Activated B cell treated with CpG ODN at 0.5 μM for 24 hours (primary cell): ENCODE measurements at regions of chr2 and their contacts with region 1.

Region 1: GRCh38 chr2:33599175-33599942 is at the start of gene FAM98A:
- DNase-seq: peak; percentile 97
- ATAC-seq: peak; percentile 94
- H3K4me3 Mint-ChIP-seq: peak within 1 kb of the TSS; percentile 99
- H3K27ac Mint-ChIP-seq: peak within 1 kb of the TSS; percentile 96
- H3K4me1 Mint-ChIP-seq: peaks cover 34% of the 10 kb centered on the region
- H3K27me3 Mint-ChIP-seq: no peaks in the 10 kb centered on the region
- CTCF ChIP-seq: no peak
- total RNA-seq, gene FAM98A: 30.2 and 40.5 TPM in 2 replicates

Region 2: GRCh38 chr2:32277674-32278482 is 1321.5 kb before region 1 on chr2 and contains the start of gene YIPF4:
- CTCF ChIA-PET with region 1: no interaction called
- POLR2A ChIA-PET with region 1: no interaction called
- intact Hi-C with region 1: loop called (anchors 5 kb)
- DNase-seq: peak; percentile 92
- ATAC-seq: peak; percentile 98
- H3K4me3 Mint-ChIP-seq: peak within 1 kb of the TSS; percentile 90
- H3K27ac Mint-ChIP-seq: peak within 1 kb of the TSS; percentile 94
- H3K4me1 Mint-ChIP-seq: peaks cover 23% of the 10 kb centered on the region
- H3K27me3 Mint-ChIP-seq: peaks cover 9% of the 10 kb centered on the region
- CTCF ChIP-seq: no peak
- total RNA-seq, gene YIPF4: 25.6 and 27.2 TPM in 2 replicates

Region 3: DNA sequence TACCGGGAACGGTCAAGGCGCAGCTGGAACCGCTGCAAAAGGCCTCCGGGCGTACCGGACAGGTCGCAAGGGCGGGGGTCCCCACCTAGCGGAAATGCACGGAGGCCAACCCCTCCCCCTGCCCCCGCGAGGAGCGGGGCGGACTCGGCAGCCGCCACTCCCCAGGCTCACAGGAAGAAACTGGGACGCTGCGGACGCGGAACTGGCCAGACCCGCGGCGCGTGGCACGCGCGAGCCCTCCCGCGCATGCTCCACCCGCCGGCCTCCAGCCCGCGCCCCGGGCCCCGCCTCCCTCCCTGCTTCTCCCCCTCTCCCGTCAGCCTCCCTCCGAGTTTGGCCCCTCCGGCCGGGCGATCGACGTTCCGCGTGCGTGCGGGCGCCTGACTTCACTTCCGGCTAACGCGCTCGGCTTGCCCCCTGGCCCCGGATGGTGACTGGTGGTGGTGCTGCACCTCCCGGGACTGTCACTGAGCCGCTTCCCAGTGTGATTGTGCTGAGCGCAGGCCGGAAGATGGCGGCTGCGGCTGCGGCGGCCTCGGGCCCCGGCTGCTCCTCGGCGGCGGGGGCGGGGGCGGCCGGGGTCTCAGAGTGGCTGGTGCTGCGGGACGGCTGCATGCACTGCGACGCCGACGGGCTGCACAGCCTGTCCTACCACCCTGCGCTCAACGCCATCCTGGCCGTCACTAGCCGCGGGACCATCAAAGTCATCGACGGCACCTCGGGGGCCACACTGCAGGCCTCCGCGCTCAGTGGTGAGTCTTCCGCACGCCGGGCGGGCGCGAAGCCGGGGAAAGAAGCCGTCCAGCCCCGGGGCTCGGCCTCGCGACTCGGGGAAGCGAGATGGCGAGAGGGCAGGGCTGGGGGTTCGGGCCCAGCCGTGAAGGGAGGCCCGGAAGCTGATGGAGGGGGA is 1242.4 kb before region 1 on chr2 and contains the start of gene BIRC6:
- CTCF ChIA-PET with region 1: no interaction called
- POLR2A ChIA-PET with region 1: no interaction called
- intact Hi-C with region 1: loop called (anchors 5 kb)
- DNase-seq: peak; percentile 96
- ATAC-seq: peak; percentile 87
- H3K4me3 Mint-ChIP-seq: peak within 1 kb of the TSS; percentile 93
- H3K27ac Mint-ChIP-seq: peak within 1 kb of the TSS; percentile 90
- H3K4me1 Mint-ChIP-seq: peaks cover 41% of the 10 kb centered on the region
- H3K27me3 Mint-ChIP-seq: no peaks in the 10 kb centered on the region
- CTCF ChIP-seq: no peak
- total RNA-seq, gene BIRC6: 155 and 180 TPM in 2 replicates

Region 4: DNA sequence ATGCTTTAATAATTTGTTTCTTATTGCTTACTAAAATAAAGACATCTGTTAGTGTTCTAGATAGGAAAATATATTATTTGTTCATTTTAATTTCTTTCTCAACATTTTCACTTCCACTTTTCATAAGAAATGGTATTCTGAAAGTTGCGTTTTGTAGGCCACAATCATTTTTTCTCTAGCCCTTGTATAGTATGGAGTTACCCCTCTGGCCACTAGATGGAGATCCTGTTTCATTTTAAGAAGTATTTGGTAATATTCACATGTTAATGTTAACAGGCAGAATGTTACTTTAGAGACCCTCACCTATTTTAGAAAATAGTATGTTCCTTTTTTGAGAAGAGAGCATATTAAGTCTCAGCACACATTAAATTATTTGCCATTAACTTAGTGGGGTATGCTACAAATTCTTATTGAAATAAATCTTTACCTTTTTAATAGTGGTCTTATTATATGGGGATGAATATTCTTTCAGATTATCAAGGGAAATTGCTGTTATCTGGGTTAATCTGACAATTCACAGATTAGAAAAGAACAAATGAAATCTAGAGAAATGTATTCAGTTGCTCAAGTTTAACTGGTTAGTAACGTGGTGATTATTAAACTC is 1045.4 kb before region 1 on chr2:
- CTCF ChIA-PET with region 1: no interaction called
- POLR2A ChIA-PET with region 1: no interaction called
- intact Hi-C with region 1: loop called (anchors 5 kb)
- DNase-seq: no peak
- ATAC-seq: peak; percentile 85
- H3K4me3 Mint-ChIP-seq: no peak overlapping the region
- H3K27ac Mint-ChIP-seq: peak overlapping the region; percentile 30
- H3K4me1 Mint-ChIP-seq: peaks cover 6% of the 10 kb centered on the region
- H3K27me3 Mint-ChIP-seq: no peaks in the 10 kb centered on the region
- CTCF ChIP-seq: no peak

Region 5: GRCh38 chr2:32627814-32628579 is 971.4 kb before region 1 on chr2 and contains the start of gene TTC27:
- CTCF ChIA-PET with region 1: no interaction called
- POLR2A ChIA-PET with region 1: interaction called, 10 read pairs
- intact Hi-C with region 1: loop called (anchors 1 kb)
- DNase-seq: peak; percentile 93
- ATAC-seq: peak; percentile 100
- H3K4me3 Mint-ChIP-seq: peak within 1 kb of the TSS; percentile 97
- H3K27ac Mint-ChIP-seq: peak within 1 kb of the TSS; percentile 93
- H3K4me1 Mint-ChIP-seq: peaks cover 27% of the 10 kb centered on the region
- H3K27me3 Mint-ChIP-seq: no peaks in the 10 kb centered on the region
- CTCF ChIP-seq: no peak
- total RNA-seq, gene TTC27: 34.8 and 36.3 TPM in 2 replicates

Region 6: DNA sequence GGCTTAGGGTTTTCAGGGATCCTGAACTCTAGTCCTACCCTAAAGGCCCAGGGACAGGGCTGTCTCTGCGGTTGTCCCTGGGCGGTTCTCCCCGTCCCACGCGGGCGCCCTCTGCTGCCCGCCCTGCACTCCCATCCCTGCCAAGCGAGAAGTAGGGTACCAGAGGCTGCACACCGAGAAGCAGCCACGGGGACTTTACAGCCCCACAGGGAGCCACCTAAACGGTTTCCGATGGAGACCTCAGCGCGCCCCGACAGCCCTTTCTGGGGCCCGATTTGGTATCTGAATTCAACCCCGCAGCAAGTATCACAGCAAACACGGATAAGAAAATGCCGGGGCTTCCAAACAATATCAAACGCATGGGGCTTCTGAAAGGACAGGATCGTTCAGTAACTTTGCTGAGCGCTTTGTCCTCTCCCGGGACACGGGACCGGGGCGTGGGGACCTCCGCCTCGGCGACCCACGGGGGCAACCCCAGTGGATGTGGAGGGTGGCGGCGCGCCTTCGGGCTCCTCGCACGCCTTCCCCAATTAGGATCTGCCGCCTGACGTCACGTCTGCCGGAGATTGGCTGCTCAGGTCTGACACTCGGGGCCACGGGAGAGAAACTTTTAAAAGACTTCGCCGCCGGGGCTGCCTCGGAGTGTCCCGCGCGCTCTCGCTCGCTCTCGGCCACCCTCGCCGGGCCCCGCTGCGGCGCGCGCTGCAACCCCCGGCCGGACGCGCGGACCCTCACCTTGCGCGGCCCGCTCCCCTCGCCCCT is 652.9 kb before region 1 on chr2 and contains the start of gene LTBP1:
- CTCF ChIA-PET with region 1: no interaction called
- POLR2A ChIA-PET with region 1: no interaction called
- intact Hi-C with region 1: loop called (anchors 5 kb)
- DNase-seq: peak; percentile 41
- ATAC-seq: peak; percentile 78
- H3K4me3 Mint-ChIP-seq: peak within 1 kb of the TSS; percentile 83
- H3K27ac Mint-ChIP-seq: no peak within 1 kb of the TSS
- H3K4me1 Mint-ChIP-seq: peaks cover 15% of the 10 kb centered on the region
- H3K27me3 Mint-ChIP-seq: peaks cover 29% of the 10 kb centered on the region
- CTCF ChIP-seq: no peak
- total RNA-seq, gene LTBP1: 0.07 TPM in 1 of 2 replicates, not detected in the other

Region 7: DNA sequence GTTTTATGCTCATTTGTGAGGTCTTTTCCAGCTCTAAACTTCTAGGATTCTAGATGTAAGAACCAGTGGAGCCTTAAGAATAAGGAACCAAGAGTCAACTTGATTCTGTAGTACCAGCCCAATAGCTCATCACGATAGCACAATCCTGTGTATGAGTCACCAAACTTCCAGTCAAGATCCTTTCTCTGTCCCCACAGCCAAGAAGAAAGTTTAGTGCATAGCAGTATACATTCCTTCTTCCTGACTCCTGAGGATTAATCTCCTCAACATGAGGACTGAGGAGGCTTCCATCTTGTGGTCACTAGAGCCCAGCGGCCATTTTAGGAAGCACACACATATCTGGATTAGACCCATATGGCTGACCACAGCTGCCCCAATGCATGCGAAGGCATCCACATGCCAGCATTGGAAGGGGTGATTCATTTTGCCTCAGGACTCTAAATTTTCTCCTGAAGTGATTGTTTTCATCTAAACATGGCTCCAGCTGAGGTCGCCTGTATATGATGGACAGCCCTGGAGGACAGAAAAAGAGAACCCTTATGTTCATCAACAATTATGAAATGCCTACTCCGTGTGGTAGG is 69.5 kb before region 1 on chr2:
- CTCF ChIA-PET with region 1: no interaction called
- POLR2A ChIA-PET with region 1: interaction called, 7 read pairs
- intact Hi-C with region 1: loop called (anchors 2 kb)
- DNase-seq: no peak
- ATAC-seq: peak; percentile 33
- H3K4me3 Mint-ChIP-seq: peak overlapping the region; percentile 57
- H3K27ac Mint-ChIP-seq: peak overlapping the region; percentile 98
- H3K4me1 Mint-ChIP-seq: peaks cover 89% of the 10 kb centered on the region
- H3K27me3 Mint-ChIP-seq: no peaks in the 10 kb centered on the region
- CTCF ChIP-seq: no peak

Region 8: GRCh38 chr2:33723329-33723728 is 124.0 kb after region 1 on chr2:
- CTCF ChIA-PET with region 1: no interaction called
- POLR2A ChIA-PET with region 1: no interaction called
- intact Hi-C with region 1: no loop called
- DNase-seq: no peak
- ATAC-seq: no peak
- H3K4me3 Mint-ChIP-seq: no peak overlapping the region
- H3K27ac Mint-ChIP-seq: no peak overlapping the region
- H3K4me1 Mint-ChIP-seq: no peaks in the 10 kb centered on the region
- H3K27me3 Mint-ChIP-seq: no peaks in the 10 kb centered on the region
- CTCF ChIP-seq: no peak

Region 9: DNA sequence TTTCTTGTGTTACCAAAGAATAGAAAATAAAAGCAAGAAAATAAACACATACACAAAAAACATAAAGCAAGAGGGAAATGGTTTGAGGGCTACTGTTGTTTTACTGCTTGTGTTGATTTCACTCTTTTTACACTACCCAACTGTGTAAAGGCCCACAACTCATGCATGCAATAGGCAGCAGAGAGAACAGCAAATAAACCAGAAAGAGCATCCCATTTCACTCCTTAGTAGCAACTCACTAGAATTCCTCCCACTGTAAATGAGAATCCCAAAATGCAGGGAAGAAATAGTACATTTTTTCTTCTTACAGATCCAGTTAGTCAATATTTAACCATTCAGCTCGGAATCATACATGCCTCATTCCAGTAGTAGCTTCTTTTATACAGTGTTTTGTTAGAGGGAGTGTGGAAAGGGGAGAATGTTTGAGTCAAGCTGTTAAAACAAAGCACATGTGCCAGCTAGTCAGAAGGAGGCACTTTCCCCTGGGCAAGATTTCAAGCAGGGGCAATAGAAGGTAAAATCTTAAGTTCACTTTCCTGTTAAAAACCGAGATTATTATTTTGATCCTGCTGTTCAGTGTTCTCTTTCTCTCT is 146.9 kb after region 1 on chr2:
- CTCF ChIA-PET with region 1: no interaction called
- POLR2A ChIA-PET with region 1: no interaction called
- intact Hi-C with region 1: no loop called
- DNase-seq: no peak
- ATAC-seq: no peak
- H3K4me3 Mint-ChIP-seq: no peak overlapping the region
- H3K27ac Mint-ChIP-seq: no peak overlapping the region
- H3K4me1 Mint-ChIP-seq: no peaks in the 10 kb centered on the region
- H3K27me3 Mint-ChIP-seq: peaks cover 3% of the 10 kb centered on the region
- CTCF ChIP-seq: no peak